WTC11 (cell line): ENCODE measurements at regions of chr10 and their contacts with region 1.

Region 1: GRCh38 chr10:47311932-47312662 is 10.2 kb upstream of the GDF2 start:
- DNase-seq: peak; percentile 89
- ATAC-seq: peak; percentile 87
- H3K4me3 Mint-ChIP-seq: no peak overlapping the region
- H3K27ac Mint-ChIP-seq: no peak overlapping the region
- H3K4me1 Mint-ChIP-seq: peaks cover 25% of the 10 kb centered on the region
- H3K27me3 Mint-ChIP-seq: no peaks in the 10 kb centered on the region
- CTCF ChIP-seq: peak; percentile 62; the same call in 1 of the 2 replicates

Region 2: DNA sequence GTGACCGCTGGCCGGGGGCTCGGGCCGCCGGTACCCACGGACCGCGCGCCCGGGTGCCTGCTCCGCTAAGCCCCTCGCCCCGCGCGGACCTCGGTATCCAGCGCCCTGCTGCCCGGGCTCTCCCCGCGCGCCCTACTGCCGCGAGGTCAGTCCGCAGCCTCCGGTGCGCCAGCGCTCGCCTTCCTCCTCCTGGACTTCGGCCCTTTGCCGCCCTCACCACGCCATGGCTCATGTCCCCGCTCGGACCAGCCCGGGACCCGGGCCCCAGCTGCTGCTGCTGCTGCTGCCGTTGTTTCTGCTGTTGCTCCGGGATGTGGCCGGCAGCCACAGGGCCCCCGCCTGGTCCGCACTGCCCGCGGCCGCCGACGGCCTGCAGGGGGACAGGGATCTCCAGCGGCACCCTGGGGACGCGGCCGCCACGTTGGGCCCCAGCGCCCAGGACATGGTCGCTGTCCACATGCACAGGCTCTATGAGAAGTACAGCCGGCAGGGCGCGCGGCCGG is 11.6 kb before region 1 on chr10:
- CTCF ChIA-PET with region 1: interaction called, 14 read pairs
- POLR2A ChIA-PET with region 1: no interaction called
- DNase-seq: peak; percentile 42
- ATAC-seq: peak; percentile 64
- H3K4me3 Mint-ChIP-seq: peak overlapping the region; percentile 77
- H3K27ac Mint-ChIP-seq: no peak overlapping the region
- H3K4me1 Mint-ChIP-seq: peaks cover 21% of the 10 kb centered on the region
- H3K27me3 Mint-ChIP-seq: peaks cover 47% of the 10 kb centered on the region
- CTCF ChIP-seq: no peak